ENCODE measurements at regions of chr11 and their contacts with region 1.

Region 1: DNA sequence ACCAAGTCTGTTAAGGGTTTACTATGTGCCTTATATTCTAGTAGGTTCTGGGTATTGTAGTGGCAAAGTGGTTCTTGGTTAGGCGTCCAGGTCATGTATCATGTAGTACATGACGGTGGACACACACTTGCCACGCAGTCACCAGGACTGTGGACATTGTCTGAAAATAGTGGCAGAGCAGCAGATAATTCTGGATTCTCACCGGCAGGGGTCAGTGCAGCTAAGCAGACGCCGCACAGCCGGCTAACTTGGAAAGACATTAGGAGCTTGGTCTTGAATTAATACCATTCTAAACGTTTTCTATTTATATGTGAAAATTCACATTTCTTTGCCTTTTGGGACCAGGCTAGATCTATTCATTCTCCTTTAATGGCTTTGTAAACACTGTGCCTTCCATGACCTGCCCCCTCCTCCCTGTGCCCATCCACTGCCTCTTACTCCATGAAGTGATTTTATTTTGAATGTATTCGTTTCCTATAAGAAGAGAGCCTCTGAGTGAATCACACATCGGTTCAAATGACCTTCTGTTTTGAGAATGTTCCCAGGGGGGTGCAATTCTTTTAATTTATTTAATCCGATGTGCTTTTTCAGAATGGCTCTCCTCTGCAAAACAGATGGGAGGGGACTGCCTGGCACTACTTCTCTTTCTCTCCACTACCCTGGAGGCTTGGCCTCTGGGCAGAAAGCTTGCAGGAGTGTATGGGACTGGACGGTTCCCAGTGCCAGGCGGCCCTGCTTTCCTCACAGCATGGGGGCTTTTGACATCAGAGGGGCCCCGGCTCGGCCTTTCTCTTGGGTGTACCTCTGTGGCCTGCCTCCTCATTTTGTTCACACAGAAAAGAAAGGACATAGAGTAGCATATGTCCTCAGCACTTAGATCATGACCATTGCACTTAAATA is 378.0 kb downstream of the NTM start:
- DNase-seq: no peak
- H3K4me3 ChIP-seq: no peak overlapping the region
- H3K27ac ChIP-seq: no peak overlapping the region
- H3K4me1 ChIP-seq: no peaks in the 10 kb centered on the region
- H3K27me3 ChIP-seq: peaks cover 0 to 9% (median 0%) of the 10 kb centered on the region in 4 donors
- CTCF ChIP-seq: peak; percentile 66 to 78 (median 78)
- EP300 ChIP-seq: no peak
- POLR2A ChIP-seq: no peak

Region 2: DNA sequence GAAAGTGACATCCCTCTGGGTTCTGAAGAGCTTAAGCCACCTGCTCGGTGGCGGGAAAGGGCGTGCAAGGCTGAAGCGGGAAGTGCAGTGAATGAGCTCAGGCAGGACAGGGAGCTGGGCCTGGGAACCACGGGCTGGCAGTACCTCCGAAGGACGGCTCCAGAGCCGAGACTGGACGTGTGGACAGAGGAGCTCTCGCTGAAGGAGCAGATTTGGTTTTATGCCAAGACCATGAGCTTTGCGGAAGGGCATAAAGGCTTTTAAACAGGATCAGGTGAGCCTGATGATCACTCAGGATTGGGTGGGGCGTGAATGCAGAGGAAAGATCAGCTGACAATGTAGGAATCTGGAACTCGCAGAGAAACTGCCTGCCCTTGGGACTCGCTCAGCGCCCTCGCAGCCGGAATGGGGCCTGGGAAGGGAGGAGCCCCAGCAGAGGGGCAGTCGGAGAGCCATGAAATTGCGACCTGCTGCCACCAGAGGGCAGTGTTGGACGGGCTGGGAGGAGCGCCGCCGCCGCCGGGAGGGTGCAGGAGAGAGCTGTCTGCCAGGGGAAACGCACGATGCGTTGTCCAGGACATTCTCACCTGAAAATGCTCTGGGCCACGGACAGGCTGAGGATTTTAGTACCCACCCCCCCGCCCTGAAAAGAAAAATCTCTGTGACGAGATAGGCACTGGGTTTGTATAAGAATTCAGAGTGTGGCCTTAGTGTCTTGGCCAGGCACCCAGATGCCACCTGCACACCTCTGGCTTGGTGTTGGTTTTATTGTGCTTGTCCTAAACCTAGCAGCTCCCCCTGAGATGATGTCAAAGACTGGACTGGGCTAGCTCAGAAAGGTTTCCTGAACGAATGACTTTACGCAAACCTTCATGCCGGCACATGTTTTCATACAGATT is 53.6 kb before region 1 on chr11:
- intact Hi-C with region 1: no loop called
- DNase-seq: peak; percentile 92
- H3K4me3 ChIP-seq: peak overlapping the region; percentile 17 to 31 (median 24)
- H3K27ac ChIP-seq: peak overlapping the region; percentile 26 to 43 (median 30)
- H3K4me1 ChIP-seq: peaks cover 4 to 35% (median 19%) of the 10 kb centered on the region in 4 donors
- H3K27me3 ChIP-seq: peaks cover 0 to 36% (median 2%) of the 10 kb centered on the region in 4 donors
- CTCF ChIP-seq: peak; percentile 87 to 99 (median 92)
- EP300 ChIP-seq: no peak
- POLR2A ChIP-seq: no peak

Region 3: DNA sequence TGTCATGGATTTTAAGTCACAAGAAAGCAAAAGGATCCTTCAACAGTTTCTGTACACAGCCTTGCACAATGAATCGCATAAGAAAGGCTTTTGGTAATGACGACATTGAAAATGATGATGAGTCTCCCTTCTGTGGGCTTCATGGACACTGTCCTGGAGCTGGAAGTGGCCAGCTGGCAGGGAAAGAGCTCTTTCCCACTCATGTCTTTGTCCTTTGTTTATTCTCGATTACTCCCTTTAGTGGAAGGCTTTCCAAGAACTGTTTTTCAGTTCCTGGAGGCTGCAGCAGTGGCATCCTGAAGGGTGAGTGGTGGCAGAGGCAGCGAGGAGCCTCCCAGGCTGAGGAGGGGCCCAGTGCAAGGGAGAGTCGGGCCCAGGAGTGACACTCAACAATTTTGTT is 127.2 kb after region 1 on chr11:
- intact Hi-C with region 1: no loop called
- DNase-seq: no peak
- H3K4me3 ChIP-seq: no peak overlapping the region
- H3K27ac ChIP-seq: peak overlapping the region in 3 of 4 donors; percentile 20 to 57 (median 53)
- H3K4me1 ChIP-seq: peaks cover 0 to 17% (median 16%) of the 10 kb centered on the region in 4 donors
- H3K27me3 ChIP-seq: peaks cover 0 to 3% (median 0%) of the 10 kb centered on the region in 4 donors
- CTCF ChIP-seq: no peak
- EP300 ChIP-seq: peak; percentile 27
- POLR2A ChIP-seq: no peak

Region 4: DNA sequence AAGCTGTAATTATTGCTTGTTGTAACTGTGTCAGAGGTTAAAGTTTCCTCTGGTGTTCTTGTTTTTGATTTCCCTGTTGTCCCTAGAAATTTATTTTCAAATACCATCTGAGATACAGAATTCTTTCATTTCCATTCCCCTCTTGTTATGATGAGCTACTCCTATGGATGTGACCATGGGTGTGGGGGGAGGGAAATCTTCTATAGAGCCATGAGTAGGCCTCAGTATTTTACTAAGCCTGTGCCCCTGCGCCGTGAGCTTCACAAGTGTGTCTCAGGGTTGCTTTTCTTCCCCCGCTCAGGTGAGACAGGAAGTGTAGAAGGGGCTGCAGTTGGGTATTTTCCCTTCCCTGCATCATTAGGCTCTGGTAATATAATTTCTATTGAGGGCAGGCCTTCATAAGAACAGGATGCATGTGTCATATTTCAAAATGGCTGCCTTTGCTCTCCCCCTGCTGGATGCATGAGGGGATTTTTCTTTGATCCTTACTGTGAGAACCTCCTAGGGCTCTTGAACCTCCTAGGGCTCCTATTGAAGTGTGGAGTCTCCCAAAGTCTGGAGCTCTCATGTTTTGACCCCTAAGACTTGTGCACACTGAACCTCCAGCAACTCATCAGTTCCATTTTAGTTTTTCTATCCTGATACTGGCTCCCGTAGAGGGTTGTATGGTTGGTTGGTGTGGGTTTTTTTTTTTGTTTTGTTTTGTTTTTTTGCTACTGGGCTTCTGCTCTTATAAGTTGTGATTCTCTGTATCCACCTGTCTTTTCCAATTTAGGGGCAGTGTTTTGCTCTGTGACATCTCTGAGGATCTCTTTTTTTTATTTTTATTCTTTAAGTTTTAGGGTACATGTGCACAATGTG is 280.2 kb after region 1 on chr11:
- intact Hi-C with region 1: loop called (anchors 2 kb)
- DNase-seq: peak; percentile 17
- H3K4me3 ChIP-seq: no peak overlapping the region
- H3K27ac ChIP-seq: no peak overlapping the region
- H3K4me1 ChIP-seq: peaks cover 0 to 16% (median 1%) of the 10 kb centered on the region in 4 donors
- H3K27me3 ChIP-seq: no peaks in the 10 kb centered on the region
- CTCF ChIP-seq: peak; percentile 40 to 76 (median 47)
- EP300 ChIP-seq: no peak
- POLR2A ChIP-seq: no peak